Endothelial cell of umbilical vein (primary cell): ENCODE measurements at regions of chr19 and their contacts with region 1.

Region 1: DNA sequence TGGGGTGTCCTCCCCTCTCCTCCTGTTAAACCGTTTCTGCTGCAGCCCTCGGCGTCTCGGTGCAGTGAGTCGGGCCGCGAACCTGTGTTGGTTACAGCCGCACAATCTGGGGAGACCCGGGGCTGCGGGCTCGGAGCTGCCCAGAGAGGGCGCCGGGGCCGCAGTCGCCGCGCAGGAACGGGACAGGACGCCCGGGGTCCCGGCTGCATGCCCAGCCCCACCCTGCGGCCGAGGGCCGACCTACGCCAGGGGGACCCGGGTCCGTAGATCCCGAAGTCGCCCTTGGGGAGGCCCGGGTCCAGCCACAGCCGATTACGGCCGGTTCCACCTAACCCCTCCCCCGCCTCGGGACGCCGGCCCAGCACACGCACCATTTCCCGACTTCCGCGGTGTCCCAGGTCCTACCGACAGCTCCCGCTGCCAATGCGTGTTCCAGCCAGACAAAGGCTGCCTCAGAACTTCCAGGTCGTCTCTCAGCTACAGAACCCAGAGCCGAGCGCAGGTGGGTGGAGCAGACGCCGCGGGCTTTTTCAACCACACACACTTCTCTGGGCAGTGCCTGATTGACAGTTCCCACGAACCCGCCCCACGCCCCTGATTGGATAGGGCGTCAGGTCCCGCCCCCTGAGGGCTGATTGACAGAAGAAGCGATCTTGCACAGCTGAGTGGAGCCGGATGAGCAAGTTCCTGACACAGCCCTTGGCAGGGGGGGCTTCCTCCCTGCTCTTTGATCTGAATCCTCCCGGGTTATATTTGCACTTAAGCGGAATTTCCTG is at the start of gene ZNF443:
- DNase-seq: peak; percentile 99
- H3K4me3 ChIP-seq: peak within 1 kb of the TSS; percentile 51 to 93 (median 59)
- H3K27ac ChIP-seq: peak within 1 kb of the TSS; percentile 4
- H3K4me1 ChIP-seq: peaks cover 2% of the 10 kb centered on the region
- H3K27me3 ChIP-seq: no peaks in the 10 kb centered on the region
- CTCF ChIP-seq: peak in 1 of 2 donors; percentile 6
- POLR2A ChIP-seq: peak; percentile 29
- total RNA-seq, gene ZNF443: 3.2 and 3.4 TPM in 2 replicates

Region 2: GRCh38 chr19:12294249-12295158 is 146.2 kb before region 1 on chr19 and contains the start of gene ZNF44:
- CTCF ChIA-PET with region 1: no interaction called
- POLR2A ChIA-PET with region 1: no interaction called
- dilution Hi-C with region 1: no loop called
- intact Hi-C with region 1: loop called (anchors 1 kb)
- DNase-seq: peak; percentile 95
- H3K4me3 ChIP-seq: peak within 1 kb of the TSS; percentile 43 to 91 (median 63)
- H3K27ac ChIP-seq: peak within 1 kb of the TSS; percentile 56
- H3K4me1 ChIP-seq: peaks cover 3% of the 10 kb centered on the region
- H3K27me3 ChIP-seq: no peaks in the 10 kb centered on the region
- CTCF ChIP-seq: no peak
- POLR2A ChIP-seq: peak; percentile 51
- total RNA-seq, gene ZNF44: 5.2 and 7.4 TPM in 2 replicates

Region 3: DNA sequence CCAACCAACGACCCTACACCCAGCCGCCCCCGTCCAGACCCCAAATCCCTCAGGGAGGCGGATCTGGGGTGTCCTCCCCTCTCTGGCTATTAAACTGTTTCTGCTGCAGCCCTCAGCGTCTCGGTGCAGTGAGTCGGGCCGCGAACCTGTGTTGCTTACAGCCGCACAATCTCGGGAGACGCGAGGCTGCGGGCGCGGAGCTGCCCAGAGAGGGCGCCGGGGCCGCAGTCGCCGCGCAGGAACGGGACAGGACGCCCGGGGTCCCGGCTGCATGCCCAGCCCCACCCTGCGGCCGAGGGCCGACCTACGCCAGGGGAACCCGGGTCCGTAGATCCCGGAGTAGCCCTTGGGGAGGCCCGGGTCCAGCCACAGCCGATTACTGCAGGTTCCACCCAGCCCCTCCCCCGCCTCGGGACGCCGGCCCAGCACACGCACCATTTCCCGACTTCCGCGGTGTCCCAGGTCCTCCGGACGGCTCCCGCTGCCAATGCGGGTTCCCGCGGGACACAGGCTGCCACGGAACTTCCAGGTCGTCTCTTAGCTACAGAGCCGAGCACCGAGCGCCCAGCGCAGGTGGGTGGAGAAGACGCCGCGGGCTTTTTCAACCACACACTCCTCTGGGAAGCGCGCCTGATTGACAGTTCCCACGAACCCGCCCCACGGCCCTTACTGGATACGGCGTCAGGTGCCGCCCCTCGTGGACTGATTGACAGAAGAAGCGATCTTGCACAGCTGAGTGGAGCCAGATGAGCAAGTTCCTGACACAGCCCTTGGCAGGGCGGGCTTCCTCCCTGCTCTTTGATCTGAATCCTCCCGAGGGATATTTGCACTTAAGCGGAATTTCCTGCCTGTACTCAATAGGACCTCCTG is 39.9 kb before region 1 on chr19 and contains the start of gene ZNF799:
- CTCF ChIA-PET with region 1: interaction called, 3 read pairs
- POLR2A ChIA-PET with region 1: no interaction called
- dilution Hi-C with region 1: no loop called
- intact Hi-C with region 1: loop called (anchors 1 kb)
- DNase-seq: peak; percentile 97
- H3K4me3 ChIP-seq: peak within 1 kb of the TSS; percentile 80 to 87 (median 81)
- H3K27ac ChIP-seq: peak within 1 kb of the TSS; percentile 49
- H3K4me1 ChIP-seq: peaks cover 7% of the 10 kb centered on the region
- H3K27me3 ChIP-seq: no peaks in the 10 kb centered on the region
- CTCF ChIP-seq: peak in 1 of 2 donors; percentile 5
- POLR2A ChIP-seq: no peak
- total RNA-seq, gene ZNF799: 2.7 and 3.0 TPM in 2 replicates

Region 4: DNA sequence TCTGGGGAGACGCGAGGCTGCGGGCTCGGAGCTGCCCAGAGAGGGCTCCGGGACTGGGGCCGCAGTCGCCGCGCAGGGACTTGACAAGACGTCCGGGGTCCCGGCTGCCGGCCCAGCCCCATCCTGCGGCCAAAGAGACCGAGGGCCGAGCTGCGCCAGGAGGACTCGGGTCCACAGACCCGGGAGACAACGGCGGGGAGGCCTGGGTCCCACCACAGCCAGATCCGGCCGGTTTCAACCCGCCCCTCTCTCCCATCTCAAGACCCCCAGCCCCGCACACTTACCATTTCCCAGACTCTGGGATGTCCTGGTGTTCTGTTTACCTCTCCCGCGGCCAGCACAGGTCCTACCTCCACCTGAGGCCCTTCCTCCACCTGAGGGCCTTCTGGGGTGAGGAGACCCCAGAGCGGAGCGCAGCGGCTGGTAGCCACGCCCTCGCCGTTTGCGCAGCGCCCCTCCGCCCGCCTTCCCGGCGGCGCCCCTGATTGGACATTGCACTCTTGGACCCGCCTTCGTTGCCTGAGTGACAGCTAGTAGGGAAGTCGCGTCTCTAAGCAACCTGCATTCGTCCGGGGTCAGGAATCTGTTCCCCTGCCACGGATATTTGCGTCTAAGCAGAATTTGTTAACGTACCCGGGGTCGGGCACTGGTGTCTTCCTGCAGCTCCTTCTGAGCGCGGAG is 43.8 kb after region 1 on chr19 and contains the start of gene ZNF709:
- CTCF ChIA-PET with region 1: no interaction called
- POLR2A ChIA-PET with region 1: no interaction called
- dilution Hi-C with region 1: no loop called
- intact Hi-C with region 1: loop called (anchors 1 kb)
- DNase-seq: peak; percentile 95
- H3K4me3 ChIP-seq: peak within 1 kb of the TSS; percentile 73 to 77 (median 74)
- H3K27ac ChIP-seq: no peak within 1 kb of the TSS
- H3K4me1 ChIP-seq: peaks cover 7% of the 10 kb centered on the region
- H3K27me3 ChIP-seq: no peaks in the 10 kb centered on the region
- CTCF ChIP-seq: no peak
- POLR2A ChIP-seq: peak; percentile 42
- total RNA-seq, gene ZNF709: 1.4 and 1.8 TPM in 2 replicates